Posterior cingulate gyrus (tissue), 11 donors: ENCODE measurements at regions of chr1 and their contacts with region 1.

Region 1: DNA sequence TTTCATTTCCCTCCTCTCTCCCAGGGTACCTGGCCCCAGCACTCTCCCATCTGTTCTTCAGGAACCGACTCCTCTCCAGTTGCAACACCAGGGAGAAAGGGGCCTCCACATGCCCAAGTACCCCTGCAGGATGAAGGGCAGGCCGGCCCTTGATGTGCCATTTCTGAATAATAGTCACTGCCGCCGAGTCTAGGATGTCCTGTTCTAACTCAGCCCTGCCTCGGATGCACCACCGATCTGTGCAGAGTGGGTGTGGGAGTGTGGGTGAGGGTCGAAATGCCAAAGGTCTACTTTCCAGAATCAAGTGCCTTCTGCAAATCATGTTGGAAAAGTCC is 25.4 kb upstream of the SPSB1 start:
- DNase-seq: no peak

Region 2: DNA sequence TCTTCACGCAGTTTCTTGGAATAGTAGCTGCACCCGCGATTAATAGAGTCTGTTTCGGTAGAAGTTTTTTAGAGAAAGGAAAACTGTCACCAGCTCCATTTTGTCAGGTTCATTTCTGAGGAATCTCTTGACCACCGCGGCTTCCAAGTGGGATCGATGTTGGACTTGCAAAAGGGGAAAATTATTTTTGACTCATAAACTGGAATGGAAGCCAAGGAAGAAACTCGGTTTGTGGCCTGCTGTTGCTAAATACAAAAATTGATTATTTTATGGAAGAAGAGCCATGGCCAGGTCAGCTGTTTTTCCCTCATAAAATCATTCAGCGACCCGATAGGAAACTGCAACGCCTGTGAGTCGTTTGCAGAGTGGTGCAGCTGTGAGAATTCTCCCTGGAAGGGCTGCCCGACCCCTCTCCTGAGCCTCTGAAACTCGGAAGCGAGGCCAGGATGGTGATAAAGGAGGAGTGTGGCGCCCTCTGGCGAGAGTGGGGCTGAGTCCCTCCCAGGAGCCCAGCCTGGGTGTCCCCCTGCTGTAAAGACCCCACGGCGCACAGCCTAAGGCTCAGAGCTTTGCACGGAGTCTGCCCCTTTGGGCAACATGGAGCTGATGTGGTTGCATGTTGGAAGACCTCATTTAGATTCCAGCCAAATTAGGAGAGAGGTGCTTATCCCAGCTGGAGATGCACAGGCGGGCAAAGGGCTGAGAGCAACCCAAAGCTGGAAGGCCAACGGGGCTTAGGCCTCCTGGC is 188.3 kb after region 1 on chr1:
- intact Hi-C with region 1: loop called (anchors 2 kb)
- DNase-seq: peak; percentile 32 to 95 (median 74)